AG04450 (cell line): ENCODE measurements at regions of chr11 and their contacts with region 1.

Region 1: GRCh38 chr11:7571640-7572000 is 57.8 kb downstream of the PPFIBP2 start:
- DNase-seq: peak; percentile 46
- H3K4me3 ChIP-seq: no peak overlapping the region
- H3K27ac ChIP-seq: no peak overlapping the region
- H3K27me3 ChIP-seq: peaks cover 5% of the 10 kb centered on the region
- CTCF ChIP-seq: peak; percentile 99

Region 2: GRCh38 chr11:7467652-7468051 is 104.0 kb before region 1 on chr11:
- CTCF ChIA-PET with region 1: no interaction called
- POLR2A ChIA-PET with region 1: no interaction called
- DNase-seq: no peak
- H3K4me3 ChIP-seq: no peak overlapping the region
- H3K27ac ChIP-seq: no peak overlapping the region
- H3K27me3 ChIP-seq: no peaks in the 10 kb centered on the region
- CTCF ChIP-seq: no peak

Region 3: GRCh38 chr11:7520981-7521487 is 50.6 kb before region 1 on chr11:
- CTCF ChIA-PET with region 1: interaction called, 14 read pairs
- POLR2A ChIA-PET with region 1: no interaction called
- DNase-seq: no peak
- H3K4me3 ChIP-seq: no peak overlapping the region
- H3K27ac ChIP-seq: no peak overlapping the region
- H3K27me3 ChIP-seq: peaks cover 9% of the 10 kb centered on the region
- CTCF ChIP-seq: no peak

Region 4: DNA sequence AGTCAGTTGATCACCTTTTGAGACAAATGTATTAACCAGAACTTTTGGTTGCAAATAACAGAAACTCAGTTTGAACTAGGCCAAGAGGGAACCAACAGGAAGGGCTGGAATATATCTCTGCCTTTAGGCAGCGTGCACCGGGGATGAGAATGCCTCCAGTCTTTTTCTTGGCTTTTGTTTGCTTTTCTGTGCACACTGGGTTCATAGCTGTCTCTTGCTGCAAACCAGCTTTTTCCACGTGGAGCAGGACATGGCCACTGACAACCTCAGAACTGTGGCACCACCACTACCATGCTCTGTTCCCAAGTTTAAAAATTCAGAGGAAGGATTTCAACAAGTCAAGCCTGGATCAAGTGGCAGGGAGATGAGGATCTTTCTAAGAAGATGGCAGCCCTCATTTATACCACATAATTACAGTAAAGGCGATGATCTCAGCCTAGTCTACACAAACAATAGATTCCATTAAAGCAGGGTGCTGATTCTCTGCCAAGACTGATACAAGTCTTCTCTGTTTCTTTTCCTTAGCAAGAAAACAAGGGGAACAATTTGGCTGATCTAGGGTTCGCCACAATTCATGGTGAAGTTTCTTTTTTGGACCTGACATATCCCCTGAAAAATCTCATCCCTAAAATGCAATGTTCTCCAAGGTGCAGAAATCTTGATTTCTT is 16.0 kb after region 1 on chr11:
- CTCF ChIA-PET with region 1: interaction called, 47 read pairs
- POLR2A ChIA-PET with region 1: no interaction called
- DNase-seq: no peak
- H3K4me3 ChIP-seq: no peak overlapping the region
- H3K27ac ChIP-seq: no peak overlapping the region
- H3K27me3 ChIP-seq: no peaks in the 10 kb centered on the region
- CTCF ChIP-seq: no peak

Region 5: GRCh38 chr11:7630002-7630401 is 58.4 kb after region 1 on chr11:
- CTCF ChIA-PET with region 1: interaction called, 12 read pairs
- POLR2A ChIA-PET with region 1: no interaction called
- DNase-seq: no peak
- H3K4me3 ChIP-seq: no peak overlapping the region
- H3K27ac ChIP-seq: no peak overlapping the region
- H3K27me3 ChIP-seq: no peaks in the 10 kb centered on the region
- CTCF ChIP-seq: no peak

Region 6: GRCh38 chr11:7657306-7658025 is 85.8 kb after region 1 on chr11:
- CTCF ChIA-PET with region 1: interaction called, 184 read pairs
- POLR2A ChIA-PET with region 1: interaction called, 5 read pairs
- DNase-seq: no peak
- H3K4me3 ChIP-seq: no peak overlapping the region
- H3K27ac ChIP-seq: no peak overlapping the region
- H3K27me3 ChIP-seq: no peaks in the 10 kb centered on the region
- CTCF ChIP-seq: peak; percentile 62

Region 7: DNA sequence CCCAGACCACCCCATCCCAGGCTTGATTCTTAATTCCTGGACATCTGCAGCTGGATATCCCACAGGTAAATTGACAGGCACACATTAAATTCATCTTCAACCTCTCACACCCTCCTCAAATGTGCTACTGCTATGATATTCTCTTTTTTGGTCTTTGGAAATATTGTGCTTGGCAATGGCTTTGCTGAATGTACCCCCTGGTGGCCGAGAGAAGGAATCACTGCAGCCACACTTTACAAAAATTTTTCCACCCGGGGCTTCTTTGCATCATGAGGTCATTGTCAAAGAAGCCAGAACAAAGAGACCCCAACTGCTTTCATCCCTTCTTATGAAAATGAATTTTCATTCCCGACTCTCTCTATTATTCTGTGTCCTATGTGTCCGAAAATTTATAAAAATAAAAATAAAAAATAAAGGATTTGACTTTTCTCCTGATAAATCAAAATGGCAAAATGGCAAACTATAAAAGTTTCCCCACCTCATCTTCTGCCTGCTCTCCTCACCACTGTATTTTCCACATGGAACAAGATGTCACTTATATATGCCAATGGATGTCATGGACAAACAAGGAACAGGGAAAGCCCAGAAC is 116.7 kb after region 1 on chr11:
- CTCF ChIA-PET with region 1: interaction called, 53 read pairs
- POLR2A ChIA-PET with region 1: no interaction called
- DNase-seq: no peak
- H3K4me3 ChIP-seq: no peak overlapping the region
- H3K27ac ChIP-seq: no peak overlapping the region
- H3K27me3 ChIP-seq: peaks cover 26% of the 10 kb centered on the region
- CTCF ChIP-seq: peak; percentile 87

Region 8: GRCh38 chr11:7703740-7704139 is 132.1 kb after region 1 on chr11:
- CTCF ChIA-PET with region 1: no interaction called
- POLR2A ChIA-PET with region 1: no interaction called
- DNase-seq: no peak
- H3K4me3 ChIP-seq: no peak overlapping the region
- H3K27ac ChIP-seq: no peak overlapping the region
- H3K27me3 ChIP-seq: no peaks in the 10 kb centered on the region
- CTCF ChIP-seq: no peak

Region 9: DNA sequence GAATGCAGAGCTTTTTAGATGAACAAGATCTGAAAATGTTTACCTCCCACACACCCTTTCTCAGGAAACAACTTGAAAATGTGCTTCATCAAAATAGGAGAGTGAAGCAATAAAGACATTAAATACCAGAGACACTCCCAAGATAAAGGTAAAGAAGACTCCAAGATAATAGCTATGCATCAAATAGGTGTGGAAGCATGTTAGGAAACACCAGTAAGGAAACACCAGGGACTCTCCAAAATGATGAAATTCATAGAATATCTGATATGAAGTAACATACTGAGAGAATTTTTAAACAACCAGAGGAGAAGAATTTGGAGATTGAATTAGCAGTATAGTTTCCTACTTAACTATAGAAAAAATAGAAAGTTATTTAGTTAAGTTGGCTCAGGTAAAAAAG is 302.4 kb after region 1 on chr11:
- CTCF ChIA-PET with region 1: no interaction called
- POLR2A ChIA-PET with region 1: no interaction called
- DNase-seq: no peak
- H3K4me3 ChIP-seq: no peak overlapping the region
- H3K27ac ChIP-seq: no peak overlapping the region
- H3K27me3 ChIP-seq: no peaks in the 10 kb centered on the region
- CTCF ChIP-seq: no peak